H1 (cell line): ENCODE measurements at regions of chr12 and their contacts with region 1.

Region 1: GRCh38 chr12:31589904-31590641 is 863 bp downstream of the DENND5B start:
- DNase-seq: peak in 1 of 2 experiments; percentile 84
- H3K4me3 ChIP-seq: peak overlapping the region; percentile 82 to 90 (median 85)
- H3K27ac ChIP-seq: peak overlapping the region; percentile 59; the same call in 1 of the 2 replicates
- H3K4me1 ChIP-seq: peaks cover 0 to 7% (median 2%) of the 10 kb centered on the region in 4 experiments; a peak in 2 of 7 replicates
- H3K27me3 ChIP-seq: peaks cover 0 to 6% (median 4%) of the 10 kb centered on the region in 4 experiments; a peak in 3 of 7 replicates
- CTCF ChIP-seq: 0 out of 4 replicates have a peak, but pooled peaks of 1 of the 3 experiments have one; percentile 3
- EP300 ChIP-seq: no peak
- POLR2A ChIP-seq: no peak; a peak in 1 of 3 replicates
- RAD21 ChIP-seq: 0 out of 4 replicates have a peak, but pooled peaks have one; percentile 2 to 3

Region 2: DNA sequence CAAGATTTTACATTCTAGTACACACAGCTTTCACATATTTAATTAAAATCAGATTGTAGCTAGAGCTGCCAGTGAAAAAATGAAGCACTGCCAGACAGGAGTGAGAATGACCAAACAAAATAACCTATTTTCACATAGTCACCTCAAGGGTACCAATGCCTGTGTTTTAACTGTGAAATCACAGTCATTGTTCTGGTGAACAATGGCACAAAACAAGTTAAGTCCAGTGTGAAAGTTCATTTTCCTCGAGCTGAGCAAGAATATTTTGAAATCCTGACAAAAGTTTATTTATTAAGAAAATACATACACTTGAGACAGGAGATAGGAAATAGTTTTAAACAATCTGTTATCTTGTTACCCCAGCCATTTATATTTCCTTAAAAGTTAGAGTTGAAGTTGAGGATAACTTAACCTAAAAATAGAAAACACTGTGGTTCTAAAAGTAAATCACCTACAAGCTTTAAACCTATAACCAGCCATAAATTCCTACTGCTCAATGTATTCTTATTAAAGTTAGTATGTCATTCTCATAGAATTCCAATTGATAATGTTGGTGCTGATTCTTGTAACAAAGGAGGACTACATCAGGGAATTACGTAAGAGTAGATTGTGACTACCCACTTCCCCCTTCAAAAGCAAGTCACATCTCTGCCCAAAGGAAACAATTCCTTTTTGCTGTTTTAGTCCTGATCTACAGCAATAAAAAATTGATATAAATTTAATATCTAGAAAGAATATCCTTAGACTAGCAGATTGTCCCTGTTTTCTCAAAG is 15.1 kb before region 1 on chr12:
- CTCF ChIA-PET with region 1: interaction called, 10 read pairs
- POLR2A ChIA-PET with region 1: interaction called, 13 read pairs
- DNase-seq: no peak
- H3K4me3 ChIP-seq: no peak overlapping the region
- H3K27ac ChIP-seq: no peak overlapping the region
- H3K4me1 ChIP-seq: peaks cover 0 to 10% (median 4%) of the 10 kb centered on the region in 4 experiments; a peak in 4 of 7 replicates
- H3K27me3 ChIP-seq: no peaks in the 10 kb centered on the region
- CTCF ChIP-seq: no peak
- EP300 ChIP-seq: no peak
- POLR2A ChIP-seq: no peak
- RAD21 ChIP-seq: no peak

Region 3: DNA sequence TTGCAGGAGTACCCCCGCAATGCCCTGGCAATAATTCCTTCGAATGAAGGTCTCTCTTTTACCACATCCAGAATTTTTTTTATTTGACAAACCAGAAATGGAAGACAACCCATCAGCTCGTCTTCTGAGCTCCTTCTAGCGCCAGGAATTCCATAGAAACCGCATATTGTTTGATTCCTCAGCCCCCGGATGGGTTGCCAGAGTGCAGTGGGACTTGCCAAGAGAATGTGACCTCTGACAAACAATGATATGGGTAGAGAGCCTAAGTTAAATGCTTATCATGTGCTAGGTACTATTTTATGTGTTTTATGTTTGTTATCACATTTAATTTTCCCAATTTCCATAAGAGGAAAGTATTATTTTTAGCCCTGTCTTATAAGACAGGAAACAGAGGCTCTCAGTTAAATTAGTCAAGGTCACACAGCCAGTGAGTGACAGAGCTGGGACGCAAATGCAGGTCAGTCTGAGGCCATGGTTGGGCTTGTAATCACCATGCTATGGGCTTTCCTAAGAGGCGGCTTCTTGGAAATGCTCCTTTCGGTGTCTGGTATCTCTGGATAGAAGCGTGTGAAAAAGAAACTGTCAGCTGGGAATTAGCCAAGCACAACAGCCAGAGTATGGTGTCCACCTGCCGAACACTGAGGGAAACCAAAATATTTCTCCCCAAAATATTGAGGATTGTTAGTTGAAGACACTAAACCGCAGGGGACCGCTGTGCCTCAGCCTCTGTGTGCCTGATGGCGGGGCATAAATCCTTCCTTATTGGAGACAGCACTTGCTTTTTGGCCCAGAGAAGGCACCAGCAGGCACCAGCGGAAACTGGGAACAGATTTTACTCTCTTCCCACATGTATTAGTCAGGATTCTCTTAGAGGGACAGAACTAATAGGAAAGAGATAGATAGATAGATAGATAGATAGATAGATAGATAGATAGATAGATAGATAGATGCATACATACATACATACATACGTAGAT is 40.0 kb after region 1 on chr12:
- CTCF ChIA-PET with region 1: no interaction called
- POLR2A ChIA-PET with region 1: no interaction called
- DNase-seq: no peak
- H3K4me3 ChIP-seq: no peak overlapping the region
- H3K27ac ChIP-seq: no peak overlapping the region
- H3K4me1 ChIP-seq: no peaks in the 10 kb centered on the region
- H3K27me3 ChIP-seq: no peaks in the 10 kb centered on the region
- CTCF ChIP-seq: no peak
- EP300 ChIP-seq: no peak
- POLR2A ChIP-seq: no peak
- RAD21 ChIP-seq: no peak

Region 4: DNA sequence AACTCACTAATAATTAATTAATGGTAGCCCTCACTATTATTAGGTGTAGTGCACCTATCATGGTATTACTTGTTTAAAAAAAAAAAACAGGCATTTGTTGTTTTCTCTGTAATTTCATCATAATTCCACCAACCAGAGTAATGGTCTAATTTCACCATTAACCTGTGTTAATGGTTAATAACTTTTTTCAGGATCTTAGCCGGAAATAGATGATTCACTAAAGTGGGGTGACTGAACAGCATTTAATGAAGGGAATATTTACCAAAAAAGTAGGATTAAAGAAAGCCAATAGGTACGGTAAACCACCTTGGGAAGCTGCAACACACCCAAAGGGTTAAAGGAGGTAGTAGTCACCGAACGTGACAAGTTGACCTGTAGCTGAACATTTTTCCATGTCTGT is 82.4 kb after region 1 on chr12:
- CTCF ChIA-PET with region 1: no interaction called
- POLR2A ChIA-PET with region 1: no interaction called
- DNase-seq: no peak
- H3K4me3 ChIP-seq: no peak overlapping the region
- H3K27ac ChIP-seq: no peak overlapping the region
- H3K4me1 ChIP-seq: no peaks in the 10 kb centered on the region
- H3K27me3 ChIP-seq: no peaks in the 10 kb centered on the region
- CTCF ChIP-seq: no peak
- EP300 ChIP-seq: no peak
- POLR2A ChIP-seq: no peak
- RAD21 ChIP-seq: no peak